ENCODE measurements at regions of chr12 and their contacts with region 1.

Region 1: DNA sequence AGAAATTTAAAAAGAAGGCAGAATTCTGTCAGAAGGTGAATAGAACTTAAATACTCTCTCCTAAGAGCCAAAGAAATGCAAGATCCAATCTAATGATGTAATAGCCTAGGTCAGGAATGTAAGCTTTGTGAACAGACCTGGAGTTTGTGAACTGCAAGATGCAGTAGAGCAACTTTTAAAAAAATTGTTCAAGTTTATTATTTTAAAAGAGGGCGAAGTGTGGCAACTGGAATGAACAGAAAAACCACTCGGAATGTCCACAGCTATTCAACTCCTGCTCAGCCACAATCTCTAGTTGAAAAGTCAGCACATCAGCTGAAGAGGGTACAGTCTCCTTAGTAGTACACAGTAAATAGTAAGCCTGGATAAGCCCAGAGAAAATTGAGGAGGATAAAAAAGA is 228.8 kb downstream of the PPFIA2 start:
- DNase-seq: no peak

Region 2: GRCh38 chr12:81573228-81573627 is 42.9 kb after region 1 on chr12:
- CTCF ChIA-PET with region 1: no interaction called
- POLR2A ChIA-PET with region 1: no interaction called
- DNase-seq: no peak

Region 3: DNA sequence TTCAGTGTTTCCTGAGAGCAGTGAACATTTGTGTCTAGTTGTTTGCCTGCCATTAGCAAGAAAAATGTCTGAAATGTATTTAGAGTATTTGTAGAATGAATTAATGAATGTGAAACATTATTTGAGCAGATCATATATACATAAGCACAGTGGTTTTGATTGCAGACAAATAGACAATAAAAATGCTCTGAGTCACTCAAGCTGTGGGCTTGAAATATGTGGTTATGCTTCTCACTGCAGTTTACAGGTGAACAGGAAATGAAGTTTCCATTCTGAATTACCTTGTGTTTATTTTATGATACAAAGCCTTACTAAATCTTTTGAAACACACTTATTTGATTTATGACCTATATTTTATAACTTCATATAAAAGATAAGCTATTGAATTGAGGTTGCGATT is 1984.0 kb after region 1 on chr12:
- CTCF ChIA-PET with region 1: interaction called, 11 read pairs
- POLR2A ChIA-PET with region 1: no interaction called
- DNase-seq: no peak

Measured in HEK293T (cell line).